MCF 10A (cell line): ENCODE measurements at regions of chr17 and their contacts with region 1.

Region 1: DNA sequence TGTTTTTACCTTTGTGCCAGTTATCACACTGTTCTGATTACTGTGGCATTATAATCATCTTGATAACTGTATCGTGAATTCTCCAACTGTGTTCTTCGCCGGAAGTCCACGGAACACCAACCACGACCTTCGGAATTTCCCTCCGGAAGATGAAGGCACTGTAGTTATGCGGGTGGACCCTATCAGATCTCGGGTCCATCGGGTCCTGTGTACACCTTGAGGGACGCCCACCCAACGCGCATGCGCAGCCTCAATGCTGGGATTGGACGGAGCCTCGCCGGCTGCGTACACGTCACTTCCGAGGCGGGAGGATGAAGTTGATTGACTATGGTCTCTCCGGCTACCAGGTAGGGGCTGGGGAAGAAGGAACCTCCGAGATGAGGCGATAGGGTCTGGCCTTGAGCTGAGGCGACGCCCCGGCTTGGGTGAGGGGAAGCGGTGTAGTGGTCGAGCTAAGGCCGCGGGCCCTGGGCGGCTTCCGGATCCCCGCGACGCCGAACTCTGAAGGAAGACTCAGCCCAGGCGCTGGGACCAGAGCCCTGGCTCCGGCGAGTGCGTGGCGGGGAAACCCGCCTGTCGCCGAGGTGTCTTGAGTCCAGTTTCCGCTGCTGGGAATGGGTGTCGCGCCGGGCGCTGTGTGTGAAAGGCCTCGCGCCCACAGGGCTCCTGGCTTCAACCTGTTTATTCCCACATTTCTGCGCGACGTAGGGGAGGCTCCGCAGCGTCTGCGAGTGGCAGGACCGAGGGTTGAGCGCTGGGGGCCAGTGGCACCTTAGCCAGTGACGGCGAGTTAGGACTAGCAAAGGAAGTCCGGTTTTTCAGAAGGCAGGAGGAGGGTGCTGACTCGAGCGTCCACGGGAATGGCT is at the start of gene DHRS7B:
- DNase-seq: peak; percentile 98
- H3K4me3 Mint-ChIP-seq: peak within 1 kb of the TSS; percentile 97
- H3K27ac Mint-ChIP-seq: peak within 1 kb of the TSS; percentile 92
- H3K4me1 Mint-ChIP-seq: peaks cover 15% of the 10 kb centered on the region
- H3K27me3 Mint-ChIP-seq: no peaks in the 10 kb centered on the region
- CTCF ChIP-seq: no peak
- total RNA-seq, gene DHRS7B: 18.0 and 21.6 TPM in 2 replicates

Region 2: GRCh38 chr17:20992987-20993862 is 133.7 kb before region 1 on chr17:
- CTCF ChIA-PET with region 1: no interaction called
- POLR2A ChIA-PET with region 1: no interaction called
- intact Hi-C with region 1: no loop called
- DNase-seq: peak; percentile 73
- H3K4me3 Mint-ChIP-seq: peak overlapping the region; percentile 50
- H3K27ac Mint-ChIP-seq: no peak overlapping the region
- H3K4me1 Mint-ChIP-seq: peaks cover 4% of the 10 kb centered on the region
- H3K27me3 Mint-ChIP-seq: no peaks in the 10 kb centered on the region
- CTCF ChIP-seq: peak; percentile 86

Region 3: GRCh38 chr17:21140911-21141310 is 14.0 kb after region 1 on chr17:
- CTCF ChIA-PET with region 1: interaction called, 17 read pairs
- POLR2A ChIA-PET with region 1: no interaction called
- intact Hi-C with region 1: no loop called
- DNase-seq: no peak
- H3K4me3 Mint-ChIP-seq: no peak overlapping the region
- H3K27ac Mint-ChIP-seq: no peak overlapping the region
- H3K4me1 Mint-ChIP-seq: no peaks in the 10 kb centered on the region
- H3K27me3 Mint-ChIP-seq: no peaks in the 10 kb centered on the region
- CTCF ChIP-seq: no peak

Region 4: GRCh38 chr17:21214015-21214776 is 87.3 kb after region 1 on chr17 and contains the start of gene TMEM11:
- CTCF ChIA-PET with region 1: interaction called, 15 read pairs
- POLR2A ChIA-PET with region 1: interaction called, 45 read pairs
- intact Hi-C with region 1: loop called (anchors 2 kb)
- DNase-seq: peak; percentile 94
- H3K4me3 Mint-ChIP-seq: peak within 1 kb of the TSS; percentile 88
- H3K27ac Mint-ChIP-seq: peak within 1 kb of the TSS; percentile 96
- H3K4me1 Mint-ChIP-seq: peaks cover 39% of the 10 kb centered on the region
- H3K27me3 Mint-ChIP-seq: no peaks in the 10 kb centered on the region
- CTCF ChIP-seq: peak; percentile 6
- total RNA-seq, gene TMEM11: 27.8 and 33.5 TPM in 2 replicates

Region 5: DNA sequence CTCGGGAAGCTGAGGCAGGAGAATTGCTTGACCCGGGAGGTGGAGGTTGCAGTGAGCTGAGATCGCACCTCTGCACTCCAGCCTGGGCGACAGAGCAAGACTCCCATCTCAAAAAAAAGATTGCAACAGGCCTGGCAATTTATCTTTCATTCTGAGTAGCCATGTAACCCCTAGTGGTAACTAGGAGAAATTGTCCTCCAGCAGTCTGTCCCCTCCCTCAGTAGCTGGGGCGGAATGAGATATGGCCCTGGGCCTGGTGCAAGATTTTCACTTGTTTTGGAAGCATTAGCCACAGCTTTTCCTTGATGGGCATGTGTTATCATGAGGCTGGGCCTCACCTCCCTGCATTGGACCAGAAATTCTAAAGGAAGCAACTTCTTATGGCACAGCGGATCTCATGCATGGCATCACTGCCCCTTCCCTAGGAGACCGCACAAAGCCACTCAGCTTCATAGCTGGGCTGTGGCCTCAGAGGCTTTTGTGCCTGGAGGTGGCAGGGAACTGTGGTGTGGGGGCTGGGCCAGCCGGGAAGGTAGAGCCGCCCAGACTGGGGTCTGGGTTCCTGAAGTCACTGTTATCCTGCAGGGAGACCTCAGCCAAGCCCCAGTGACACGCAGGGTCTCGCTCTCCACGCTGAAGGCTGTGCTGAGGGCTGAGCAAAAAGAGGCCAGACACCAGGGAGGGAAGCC is 112.9 kb after region 1 on chr17:
- CTCF ChIA-PET with region 1: interaction called, 3 read pairs
- POLR2A ChIA-PET with region 1: interaction called, 3 read pairs
- intact Hi-C with region 1: loop called (anchors 10 kb)
- DNase-seq: peak; percentile 41
- H3K4me3 Mint-ChIP-seq: no peak overlapping the region
- H3K27ac Mint-ChIP-seq: no peak overlapping the region
- H3K4me1 Mint-ChIP-seq: no peaks in the 10 kb centered on the region
- H3K27me3 Mint-ChIP-seq: peaks cover 16% of the 10 kb centered on the region
- CTCF ChIP-seq: peak; percentile 32

Region 6: GRCh38 chr17:21275579-21276263 is 148.8 kb after region 1 on chr17:
- CTCF ChIA-PET with region 1: interaction called, 10 read pairs
- POLR2A ChIA-PET with region 1: no interaction called
- intact Hi-C with region 1: loop called (anchors 1 kb)
- DNase-seq: peak; percentile 80
- H3K4me3 Mint-ChIP-seq: peak overlapping the region; percentile 77
- H3K27ac Mint-ChIP-seq: peak overlapping the region; percentile 75
- H3K4me1 Mint-ChIP-seq: peaks cover 19% of the 10 kb centered on the region
- H3K27me3 Mint-ChIP-seq: no peaks in the 10 kb centered on the region
- CTCF ChIP-seq: no peak